ENCODE measurements at regions of chr1 and their contacts with region 1.

Region 1: GRCh38 chr1:23691499-23692307 is at the start of gene RPL11:
- DNase-seq: peak; percentile 98
- H3K4me3 ChIP-seq: peak within 1 kb of the TSS; percentile 92
- H3K27ac ChIP-seq: peak within 1 kb of the TSS; percentile 93
- H3K4me1 ChIP-seq: peaks cover 30% of the 10 kb centered on the region
- H3K27me3 ChIP-seq: no peaks in the 10 kb centered on the region
- CTCF ChIP-seq: peak; percentile 79
- total RNA-seq, gene RPL11: 1,180 and 1,206 TPM in 2 replicates

Region 2: DNA sequence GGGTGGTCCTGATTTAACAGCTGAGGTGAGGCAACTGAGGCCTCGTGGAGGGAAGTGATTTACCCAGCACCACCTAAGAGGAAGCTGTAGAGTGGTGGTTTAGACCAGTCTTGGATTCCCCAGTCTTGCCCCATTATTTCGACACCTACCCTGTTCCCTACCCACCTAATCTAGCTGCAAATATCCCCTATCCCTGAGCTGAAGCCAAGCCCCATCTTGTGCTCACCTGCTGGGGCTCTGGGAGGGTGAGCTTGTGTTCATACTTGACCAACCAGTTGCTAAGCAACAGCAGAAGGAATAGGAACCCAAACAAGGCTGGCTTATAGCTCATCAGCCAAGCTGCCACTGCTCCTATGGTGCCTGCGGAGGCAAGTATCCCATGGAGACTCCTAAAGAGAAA is 678.0 kb before region 1 on chr1:
- CTCF ChIA-PET with region 1: no interaction called
- POLR2A ChIA-PET with region 1: interaction called, 19 read pairs
- intact Hi-C with region 1: no loop called
- DNase-seq: no peak
- H3K4me3 ChIP-seq: no peak overlapping the region
- H3K27ac ChIP-seq: no peak overlapping the region
- H3K4me1 ChIP-seq: no peaks in the 10 kb centered on the region
- H3K27me3 ChIP-seq: no peaks in the 10 kb centered on the region
- CTCF ChIP-seq: no peak

Region 3: DNA sequence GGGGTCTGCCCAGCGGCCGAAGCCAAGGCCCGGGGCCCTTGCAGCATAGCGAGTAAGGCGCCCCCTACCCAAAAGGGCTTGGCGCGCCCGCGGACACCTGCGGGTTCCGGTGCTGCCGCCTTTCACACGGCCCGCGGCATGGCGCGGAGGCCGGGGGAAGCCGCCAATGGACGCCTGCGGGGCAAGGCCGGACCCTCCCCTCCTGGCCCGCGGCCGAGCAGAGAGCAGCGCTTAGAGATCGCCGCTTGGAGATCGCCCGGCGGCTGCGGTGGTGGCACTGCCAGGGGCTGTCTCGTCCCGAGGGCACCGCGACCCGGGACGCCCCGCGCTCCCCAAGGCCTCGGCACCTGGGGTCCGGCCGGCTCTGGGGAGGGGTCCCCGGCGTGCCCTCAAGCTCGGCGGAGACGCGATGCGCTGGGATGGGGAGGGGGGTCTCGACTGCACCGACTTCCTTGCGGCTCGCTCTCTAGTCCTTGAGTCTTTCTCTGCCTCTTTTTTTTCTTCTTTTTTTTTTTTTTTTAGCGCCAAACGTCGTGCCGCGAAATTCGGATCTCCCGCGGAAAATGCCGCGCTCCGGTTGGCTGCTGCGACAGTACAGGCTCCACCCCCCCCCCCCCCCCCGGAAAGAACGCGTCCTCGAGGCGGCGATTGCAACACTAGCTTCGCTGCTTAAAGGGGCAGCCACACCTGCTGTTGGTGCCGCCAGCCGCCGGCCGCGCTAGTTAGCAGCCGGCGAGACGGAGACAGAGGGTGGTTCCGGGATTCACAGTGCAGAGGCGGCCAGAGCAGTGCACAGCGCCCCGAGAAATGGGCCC is 160.7 kb before region 1 on chr1 and contains the start of gene E2F2:
- CTCF ChIA-PET with region 1: no interaction called
- POLR2A ChIA-PET with region 1: no interaction called
- intact Hi-C with region 1: no loop called
- DNase-seq: peak; percentile 95
- H3K4me3 ChIP-seq: peak within 1 kb of the TSS; percentile 84
- H3K27ac ChIP-seq: peak within 1 kb of the TSS; percentile 93
- H3K4me1 ChIP-seq: peaks cover 31% of the 10 kb centered on the region
- H3K27me3 ChIP-seq: no peaks in the 10 kb centered on the region
- CTCF ChIP-seq: peak; percentile 30; the same call in 1 of the 2 replicates
- total RNA-seq, gene E2F2: 45.0 and 46.1 TPM in 2 replicates

Measured in A673 (cell line).